Natural killer cell (primary cell): ENCODE measurements at regions of chr2 and their contacts with region 1.

Region 1: GRCh38 chr2:55232084-55232862 is at the starts of genes CLHC1 and RPS27A:
- DNase-seq: peak; percentile 93 to 97
- ATAC-seq: peak; percentile 86 to 95 (median 88)
- H3K4me3 ChIP-seq: peak within 1 kb of the TSS; percentile 87
- H3K4me3 Mint-ChIP-seq: peak within 1 kb of the TSS; percentile 99
- H3K27ac ChIP-seq: peak within 1 kb of the TSS; percentile 96
- H3K27ac Mint-ChIP-seq: peak within 1 kb of the TSS; percentile 98 to 100
- H3K4me1 ChIP-seq: peaks cover 18% of the 10 kb centered on the region
- H3K4me1 Mint-ChIP-seq: peaks cover 54 to 55% of the 10 kb centered on the region in 2 donors
- H3K27me3 ChIP-seq: no peaks in the 10 kb centered on the region
- H3K27me3 Mint-ChIP-seq: no peaks in the 10 kb centered on the region
- CTCF ChIP-seq: no peak
- total RNA-seq, gene CLHC1: 5.6 to 14.9 (median 6.3) TPM
- total RNA-seq, gene RPS27A: 830 to 1,009 (median 939) TPM

Region 2: DNA sequence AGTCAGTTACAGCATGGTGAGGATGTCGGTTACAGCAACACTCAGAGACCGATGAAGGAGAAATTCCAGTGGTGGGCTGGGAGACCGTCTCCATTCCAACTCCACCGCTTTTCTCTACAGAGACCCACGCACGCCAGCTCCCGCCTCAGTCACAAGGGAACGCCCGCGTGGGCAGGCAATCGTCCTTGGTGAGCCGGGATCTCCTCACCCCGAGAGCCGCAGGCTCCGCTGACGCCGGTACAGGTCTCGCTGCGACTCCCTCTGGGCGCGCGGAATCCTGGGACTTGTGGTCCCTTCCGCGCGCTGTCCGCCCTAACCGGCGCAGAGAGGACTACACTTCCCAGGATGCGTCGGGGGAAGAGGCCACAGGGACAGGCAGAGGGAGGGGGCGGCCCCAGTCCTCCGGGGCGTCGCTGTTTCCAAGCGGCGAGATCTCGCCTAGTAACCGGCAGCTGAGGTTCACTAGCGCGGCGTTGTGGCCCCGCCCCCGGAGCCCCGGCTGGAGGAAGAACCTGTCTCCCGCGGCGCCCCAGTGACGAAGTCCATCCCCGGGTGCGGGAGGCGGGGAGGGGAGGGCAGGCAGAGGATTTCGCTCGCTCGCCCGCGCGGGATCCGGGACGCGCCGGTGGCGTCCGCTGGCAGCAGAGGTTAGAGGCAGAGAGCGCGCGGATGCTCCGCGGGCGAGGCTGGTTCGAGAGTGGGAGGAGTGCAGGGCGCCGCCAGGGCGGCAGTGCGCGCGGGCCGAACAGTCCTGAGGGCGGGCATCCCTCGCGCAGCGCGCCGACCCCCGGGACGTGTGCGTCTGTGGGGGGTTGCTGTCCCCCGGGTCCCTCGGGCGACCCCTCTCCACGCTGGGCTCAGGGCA is 508.9 kb before region 1 on chr2 and contains the start of gene EML6:
- intact Hi-C with region 1: loop called (anchors 1 kb)
- DNase-seq: peak; percentile 96 to 99
- ATAC-seq: peak; percentile 94 to 99 (median 95)
- H3K4me3 ChIP-seq: peak within 1 kb of the TSS; percentile 62
- H3K4me3 Mint-ChIP-seq: peak within 1 kb of the TSS; percentile 96
- H3K27ac ChIP-seq: peak within 1 kb of the TSS; percentile 59
- H3K27ac Mint-ChIP-seq: peak within 1 kb of the TSS; percentile 64 to 88
- H3K4me1 ChIP-seq: peaks cover 19% of the 10 kb centered on the region
- H3K4me1 Mint-ChIP-seq: peaks cover 20 to 21% of the 10 kb centered on the region in 2 donors
- H3K27me3 ChIP-seq: peaks cover 19% of the 10 kb centered on the region
- H3K27me3 Mint-ChIP-seq: peaks cover 44 to 50% of the 10 kb centered on the region in 2 donors
- CTCF ChIP-seq: peak; percentile 23
- total RNA-seq, gene EML6: 1.7 to 3.2 (median 2.4) TPM

Region 3: GRCh38 chr2:55268907-55269644 is 36.8 kb after region 1 on chr2 and contains the start of gene MTIF2:
- intact Hi-C with region 1: loop called (anchors 1 kb)
- DNase-seq: peak; percentile 88 to 91
- ATAC-seq: peak; percentile 94 to 98 (median 98)
- H3K4me3 ChIP-seq: peak within 1 kb of the TSS; percentile 60
- H3K4me3 Mint-ChIP-seq: peak within 1 kb of the TSS; percentile 100
- H3K27ac ChIP-seq: peak within 1 kb of the TSS; percentile 83
- H3K27ac Mint-ChIP-seq: peak within 1 kb of the TSS; percentile 86 to 97
- H3K4me1 ChIP-seq: peaks cover 11% of the 10 kb centered on the region
- H3K4me1 Mint-ChIP-seq: peaks cover 17 to 19% of the 10 kb centered on the region in 2 donors
- H3K27me3 ChIP-seq: no peaks in the 10 kb centered on the region
- H3K27me3 Mint-ChIP-seq: peaks cover 0 to 2% of the 10 kb centered on the region in 2 donors
- CTCF ChIP-seq: no peak
- total RNA-seq, gene MTIF2: 19.8 to 26.6 (median 20.8) TPM

Region 4: DNA sequence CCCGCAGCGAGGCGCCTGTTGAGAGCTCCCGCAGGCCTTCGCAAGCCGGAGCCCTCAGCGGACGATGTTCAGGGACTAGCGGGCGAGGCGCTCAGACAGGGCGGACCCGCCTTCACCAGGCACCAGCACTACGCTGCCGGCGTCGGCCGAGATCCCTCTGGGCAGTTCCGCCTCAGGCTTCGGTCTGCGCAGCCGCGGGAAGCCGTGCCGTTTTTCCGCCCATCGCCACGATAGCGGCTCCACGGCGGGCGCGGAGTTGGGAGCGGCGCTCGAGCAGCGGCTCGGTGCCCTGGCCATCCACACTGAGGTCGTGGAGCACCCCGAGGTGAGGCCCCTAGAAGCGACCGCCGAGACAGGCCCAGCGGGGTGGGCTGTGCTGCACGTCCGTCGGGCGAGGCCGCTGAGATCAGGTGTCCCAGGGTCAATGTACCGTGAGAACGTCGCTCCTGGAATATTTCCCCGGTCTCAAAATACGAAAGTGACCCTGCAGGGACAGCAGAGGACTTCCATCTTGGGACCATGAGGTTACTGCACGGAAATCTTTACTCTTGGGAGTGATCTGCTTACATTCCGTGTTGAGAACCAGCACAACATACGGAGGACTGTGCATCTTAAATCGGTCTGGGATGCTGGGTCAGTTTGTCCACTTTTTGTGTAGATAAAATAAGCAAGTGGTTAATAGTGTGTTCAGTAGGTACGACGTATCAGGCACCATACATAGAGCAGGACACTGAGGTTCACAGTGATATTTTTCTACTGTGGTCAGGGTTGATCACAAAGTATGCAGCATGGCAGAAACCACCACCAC is 50.0 kb after region 1 on chr2:
- intact Hi-C with region 1: loop called (anchors 5 kb)
- DNase-seq: peak; percentile 79 to 94
- ATAC-seq: peak; percentile 96 to 100 (median 97)
- H3K4me3 ChIP-seq: peak overlapping the region; percentile 77
- H3K4me3 Mint-ChIP-seq: peak overlapping the region; percentile 93
- H3K27ac ChIP-seq: peak overlapping the region; percentile 80
- H3K27ac Mint-ChIP-seq: peak overlapping the region; percentile 92 to 95
- H3K4me1 ChIP-seq: peaks cover 14% of the 10 kb centered on the region
- H3K4me1 Mint-ChIP-seq: peaks cover 16% of the 10 kb centered on the region in 2 donors
- H3K27me3 ChIP-seq: no peaks in the 10 kb centered on the region
- H3K27me3 Mint-ChIP-seq: no peaks in the 10 kb centered on the region
- CTCF ChIP-seq: no peak

Region 5: GRCh38 chr2:55419679-55420438 is 187.6 kb after region 1 on chr2 and contains the start of gene CCDC88A:
- intact Hi-C with region 1: loop called (anchors 1 kb)
- DNase-seq: peak; percentile 72 to 95
- ATAC-seq: peak; percentile 83 to 90 (median 84)
- H3K4me3 ChIP-seq: peak within 1 kb of the TSS; percentile 78
- H3K4me3 Mint-ChIP-seq: peak within 1 kb of the TSS; percentile 88
- H3K27ac ChIP-seq: peak within 1 kb of the TSS; percentile 70
- H3K27ac Mint-ChIP-seq: peak within 1 kb of the TSS; percentile 80 to 92
- H3K4me1 ChIP-seq: peaks cover 3% of the 10 kb centered on the region
- H3K4me1 Mint-ChIP-seq: peaks cover 31 to 38% of the 10 kb centered on the region in 2 donors
- H3K27me3 ChIP-seq: no peaks in the 10 kb centered on the region
- H3K27me3 Mint-ChIP-seq: peaks cover 4 to 11% of the 10 kb centered on the region in 2 donors
- CTCF ChIP-seq: no peak
- total RNA-seq, gene CCDC88A: 20.4 to 39.0 (median 26.4) TPM

Region 6: GRCh38 chr2:55519938-55520885 is 287.9 kb after region 1 on chr2:
- intact Hi-C with region 1: loop called (anchors 1 kb)
- DNase-seq: peak in 1 of 2 donors; percentile 66
- ATAC-seq: peak; percentile 5 to 7 (median 6)
- H3K4me3 ChIP-seq: peak overlapping the region; percentile 62
- H3K4me3 Mint-ChIP-seq: peak overlapping the region; percentile 100
- H3K27ac ChIP-seq: peak overlapping the region; percentile 85
- H3K27ac Mint-ChIP-seq: peak overlapping the region; percentile 90 to 100
- H3K4me1 ChIP-seq: peaks cover 16% of the 10 kb centered on the region
- H3K4me1 Mint-ChIP-seq: peaks cover 18 to 22% of the 10 kb centered on the region in 2 donors
- H3K27me3 ChIP-seq: no peaks in the 10 kb centered on the region
- H3K27me3 Mint-ChIP-seq: no peaks in the 10 kb centered on the region
- CTCF ChIP-seq: no peak

Region 7: DNA sequence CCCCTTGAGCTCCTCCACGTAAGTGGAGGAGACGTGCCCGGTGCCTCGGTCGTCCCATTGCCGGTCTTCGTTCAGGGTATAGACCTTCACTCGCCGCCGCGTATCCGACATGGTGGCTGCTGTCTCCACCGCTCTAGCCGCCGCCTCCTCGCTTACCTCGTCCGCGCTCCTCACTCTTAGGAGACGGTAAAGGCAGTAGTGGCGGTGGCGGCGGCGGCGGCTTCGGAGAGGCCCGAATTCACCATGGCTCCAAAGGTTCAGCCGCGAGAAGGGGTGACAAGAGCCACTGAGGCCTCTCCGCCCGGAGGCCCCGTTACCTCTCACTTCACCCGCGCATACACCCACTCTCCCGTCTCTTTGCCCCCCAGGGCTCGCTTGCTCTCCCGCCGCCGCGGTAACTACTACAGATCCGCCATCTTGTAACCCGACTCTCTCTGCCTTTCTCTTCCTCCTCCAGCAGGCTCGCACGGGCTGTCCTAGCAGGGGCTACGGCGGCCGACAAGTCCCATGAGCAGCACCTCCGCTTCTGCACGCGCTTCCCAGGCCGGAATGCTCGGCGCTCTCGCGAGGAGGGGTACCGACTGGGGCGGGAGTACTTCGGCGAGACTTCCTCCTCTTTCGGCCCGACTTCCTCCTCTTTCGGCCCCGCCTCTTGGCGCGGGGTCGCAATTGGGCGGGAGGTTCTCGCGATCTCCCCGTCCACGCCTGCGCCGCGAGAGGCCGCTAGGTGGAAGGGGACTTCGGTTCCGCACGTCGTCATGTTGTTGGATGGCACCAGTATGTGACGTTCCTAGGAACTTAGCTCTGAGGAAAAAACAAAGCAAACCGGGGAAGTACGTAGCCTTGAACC is 385.1 kb after region 1 on chr2 and contains the start of gene PPP4R3B:
- intact Hi-C with region 1: loop called (anchors 10 kb)
- DNase-seq: peak; percentile 96 to 99
- ATAC-seq: peak; percentile 86 to 97 (median 87)
- H3K4me3 ChIP-seq: peak within 1 kb of the TSS; percentile 98
- H3K4me3 Mint-ChIP-seq: no peak within 1 kb of the TSS
- H3K27ac ChIP-seq: peak within 1 kb of the TSS; percentile 98
- H3K27ac Mint-ChIP-seq: no peak within 1 kb of the TSS
- H3K4me1 ChIP-seq: peaks cover 26% of the 10 kb centered on the region
- H3K4me1 Mint-ChIP-seq: peaks cover 30 to 44% of the 10 kb centered on the region in 2 donors
- H3K27me3 ChIP-seq: no peaks in the 10 kb centered on the region
- H3K27me3 Mint-ChIP-seq: no peaks in the 10 kb centered on the region
- CTCF ChIP-seq: no peak
- total RNA-seq, gene PPP4R3B: 65.1 to 97.9 (median 84.9) TPM